CD8-positive, alpha-beta T cell (primary cell): ENCODE measurements at regions of chr6 and their contacts with region 1.

Region 1: DNA sequence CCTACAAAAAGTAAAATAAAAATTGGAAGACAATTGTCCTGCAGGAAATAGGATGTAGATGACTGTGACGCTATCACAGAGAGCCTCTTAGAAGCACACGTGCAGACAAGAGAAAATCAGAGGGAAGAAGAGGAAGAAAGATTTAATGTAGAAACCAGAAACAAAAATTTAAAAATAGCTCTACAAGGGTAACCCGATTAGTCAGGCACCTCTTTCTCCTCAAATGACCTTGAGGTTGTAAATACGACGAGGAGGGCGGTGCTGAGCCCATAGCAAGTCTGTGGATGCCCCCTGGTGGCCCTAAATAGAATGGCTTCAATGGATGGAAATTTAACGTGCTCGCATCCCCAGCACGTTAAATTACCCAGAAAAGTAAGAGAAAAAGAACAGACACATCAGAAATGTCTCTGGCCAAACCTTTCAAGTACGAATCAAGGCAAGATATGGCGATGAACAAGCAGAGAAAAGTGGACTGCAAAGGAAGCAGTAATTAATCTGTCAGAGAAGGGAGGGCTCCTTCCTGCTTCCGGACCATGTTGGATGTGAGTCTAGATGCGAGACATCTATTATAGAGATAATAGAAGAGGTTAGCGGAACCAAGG is 4.2 kb upstream of the PRPH2 start:
- DNase-seq: peak; percentile 29 to 95 (median 76)
- ATAC-seq: peak; percentile 98
- H3K4me3 ChIP-seq: peak overlapping the region; percentile 54 to 73
- H3K4me3 Mint-ChIP-seq: peak overlapping the region; percentile 88
- H3K27ac ChIP-seq: peak overlapping the region; percentile 75 to 85
- H3K27ac Mint-ChIP-seq: peak overlapping the region; percentile 97
- H3K4me1 ChIP-seq: peaks cover 13% of the 10 kb centered on the region
- H3K4me1 Mint-ChIP-seq: peaks cover 17% of the 10 kb centered on the region
- H3K27me3 ChIP-seq: no peaks in the 10 kb centered on the region
- H3K27me3 Mint-ChIP-seq: no peaks in the 10 kb centered on the region
- CTCF ChIP-seq: peak; percentile 88

Region 2: GRCh38 chr6:41941280-41942066 is 785.1 kb before region 1 on chr6 and contains the start of gene CCND3:
- CTCF ChIA-PET with region 1: no interaction called
- POLR2A ChIA-PET with region 1: no interaction called
- intact Hi-C with region 1: no loop called
- DNase-seq: peak; percentile 53 to 92 (median 82)
- ATAC-seq: peak; percentile 63
- H3K4me3 ChIP-seq: peak within 1 kb of the TSS; percentile 51 to 97
- H3K4me3 Mint-ChIP-seq: peak within 1 kb of the TSS; percentile 84
- H3K27ac ChIP-seq: peak within 1 kb of the TSS; percentile 50 to 63
- H3K27ac Mint-ChIP-seq: peak within 1 kb of the TSS; percentile 89
- H3K4me1 ChIP-seq: peaks cover 64% of the 10 kb centered on the region
- H3K4me1 Mint-ChIP-seq: peaks cover 65% of the 10 kb centered on the region
- H3K27me3 ChIP-seq: no peaks in the 10 kb centered on the region
- H3K27me3 Mint-ChIP-seq: no peaks in the 10 kb centered on the region
- CTCF ChIP-seq: no peak
- total RNA-seq, gene CCND3: 129 to 135 TPM

Region 3: GRCh38 chr6:42653851-42654250 is 72.7 kb before region 1 on chr6:
- CTCF ChIA-PET with region 1: interaction called, 14 read pairs
- POLR2A ChIA-PET with region 1: interaction called, 3 read pairs
- intact Hi-C with region 1: no loop called
- DNase-seq: no peak
- ATAC-seq: no peak
- H3K4me3 ChIP-seq: no peak overlapping the region
- H3K4me3 Mint-ChIP-seq: no peak overlapping the region
- H3K27ac ChIP-seq: no peak overlapping the region
- H3K27ac Mint-ChIP-seq: no peak overlapping the region
- H3K4me1 ChIP-seq: no peaks in the 10 kb centered on the region
- H3K4me1 Mint-ChIP-seq: no peaks in the 10 kb centered on the region
- H3K27me3 ChIP-seq: no peaks in the 10 kb centered on the region
- H3K27me3 Mint-ChIP-seq: no peaks in the 10 kb centered on the region
- CTCF ChIP-seq: no peak

Region 4: DNA sequence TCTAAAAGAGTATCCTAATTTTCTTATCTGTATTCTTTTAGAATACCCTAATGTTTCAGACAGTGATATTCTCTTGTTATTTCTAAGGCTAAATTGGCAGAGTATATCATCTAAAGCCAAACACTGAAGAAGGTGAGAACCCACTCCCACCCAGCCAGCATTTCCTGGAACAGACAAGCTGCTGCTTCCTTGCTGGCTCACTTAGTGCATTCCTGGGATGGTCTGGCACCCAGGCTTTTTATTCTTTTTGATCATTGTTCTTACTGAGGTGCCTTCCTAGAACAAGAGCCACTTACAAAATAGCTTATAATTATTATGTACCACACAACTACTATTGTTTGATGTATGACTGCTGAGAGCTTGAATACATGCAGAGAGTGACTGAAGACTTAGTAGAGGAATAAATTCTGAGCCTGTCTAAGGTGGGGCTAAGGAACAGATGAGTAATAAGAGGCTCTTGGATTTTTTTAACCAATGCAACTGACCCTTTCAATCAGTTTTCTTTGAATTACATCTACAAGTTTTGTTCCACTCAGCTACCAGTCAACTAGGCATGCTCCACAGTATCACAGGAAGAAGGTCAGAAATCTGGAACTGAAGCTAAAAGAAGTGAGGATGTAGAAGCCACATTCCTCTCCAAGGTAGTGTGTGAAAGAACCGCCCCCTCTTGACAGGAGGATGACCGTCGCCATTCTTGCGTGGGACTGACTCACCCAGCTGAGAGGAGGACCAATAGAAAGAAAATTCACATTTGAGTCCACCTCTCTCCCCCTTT is 34.3 kb before region 1 on chr6:
- CTCF ChIA-PET with region 1: interaction called, 22 read pairs
- POLR2A ChIA-PET with region 1: interaction called, 4 read pairs
- intact Hi-C with region 1: loop called (anchors 1 to 5 kb)
- DNase-seq: peak in 1 of 9 experiments; percentile 24
- ATAC-seq: peak; percentile 14
- H3K4me3 ChIP-seq: no peak overlapping the region
- H3K4me3 Mint-ChIP-seq: no peak overlapping the region
- H3K27ac ChIP-seq: peak overlapping the region in 1 of 2 experiments; percentile 38
- H3K27ac Mint-ChIP-seq: peak overlapping the region; percentile 91
- H3K4me1 ChIP-seq: peaks cover 39% of the 10 kb centered on the region
- H3K4me1 Mint-ChIP-seq: peaks cover 45% of the 10 kb centered on the region
- H3K27me3 ChIP-seq: no peaks in the 10 kb centered on the region
- H3K27me3 Mint-ChIP-seq: no peaks in the 10 kb centered on the region
- CTCF ChIP-seq: no peak

Region 5: DNA sequence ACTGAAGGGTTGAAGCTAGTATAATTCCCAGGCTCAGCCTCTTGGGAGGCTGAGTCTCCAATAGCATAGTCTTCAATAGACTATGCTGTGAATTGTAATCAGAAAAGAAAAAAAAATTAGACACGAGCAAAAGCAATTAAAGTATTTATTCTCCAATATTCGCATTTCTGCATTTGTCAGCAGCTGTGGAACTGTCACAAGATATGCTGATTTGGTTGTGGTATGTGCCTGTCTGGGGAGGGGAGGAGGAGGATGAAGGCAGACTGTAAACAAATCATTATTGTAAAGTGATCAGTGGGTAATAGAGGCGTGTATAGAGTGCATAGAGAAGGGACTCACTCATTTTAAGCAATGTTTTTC is 45.1 kb after region 1 on chr6:
- CTCF ChIA-PET with region 1: interaction called, 35 read pairs
- POLR2A ChIA-PET with region 1: interaction called, 31 read pairs
- intact Hi-C with region 1: loop called (anchors 1 kb)
- DNase-seq: peak in 5 of 9 experiments; percentile 34 to 83 (median 57)
- ATAC-seq: peak; percentile 21
- H3K4me3 ChIP-seq: peak overlapping the region; percentile 22 to 24
- H3K4me3 Mint-ChIP-seq: peak overlapping the region; percentile 70
- H3K27ac ChIP-seq: peak overlapping the region; percentile 81 to 98
- H3K27ac Mint-ChIP-seq: peak overlapping the region; percentile 100
- H3K4me1 ChIP-seq: peaks cover 67% of the 10 kb centered on the region
- H3K4me1 Mint-ChIP-seq: peaks cover 72% of the 10 kb centered on the region
- H3K27me3 ChIP-seq: no peaks in the 10 kb centered on the region
- H3K27me3 Mint-ChIP-seq: no peaks in the 10 kb centered on the region
- CTCF ChIP-seq: no peak

Region 6: GRCh38 chr6:42790549-42791181 is 64.1 kb after region 1 on chr6:
- CTCF ChIA-PET with region 1: interaction called, 5 read pairs
- POLR2A ChIA-PET with region 1: interaction called, 58 read pairs
- intact Hi-C with region 1: loop called in 1 of 2 experiments (anchors 5 kb)
- DNase-seq: peak in 1 of 9 experiments; percentile 45
- ATAC-seq: no peak
- H3K4me3 ChIP-seq: no peak overlapping the region
- H3K4me3 Mint-ChIP-seq: peak overlapping the region; percentile 4
- H3K27ac ChIP-seq: peak overlapping the region; percentile 10 to 51
- H3K27ac Mint-ChIP-seq: peak overlapping the region; percentile 83
- H3K4me1 ChIP-seq: peaks cover 54% of the 10 kb centered on the region
- H3K4me1 Mint-ChIP-seq: peaks cover 39% of the 10 kb centered on the region
- H3K27me3 ChIP-seq: no peaks in the 10 kb centered on the region
- H3K27me3 Mint-ChIP-seq: no peaks in the 10 kb centered on the region
- CTCF ChIP-seq: no peak

Region 7: DNA sequence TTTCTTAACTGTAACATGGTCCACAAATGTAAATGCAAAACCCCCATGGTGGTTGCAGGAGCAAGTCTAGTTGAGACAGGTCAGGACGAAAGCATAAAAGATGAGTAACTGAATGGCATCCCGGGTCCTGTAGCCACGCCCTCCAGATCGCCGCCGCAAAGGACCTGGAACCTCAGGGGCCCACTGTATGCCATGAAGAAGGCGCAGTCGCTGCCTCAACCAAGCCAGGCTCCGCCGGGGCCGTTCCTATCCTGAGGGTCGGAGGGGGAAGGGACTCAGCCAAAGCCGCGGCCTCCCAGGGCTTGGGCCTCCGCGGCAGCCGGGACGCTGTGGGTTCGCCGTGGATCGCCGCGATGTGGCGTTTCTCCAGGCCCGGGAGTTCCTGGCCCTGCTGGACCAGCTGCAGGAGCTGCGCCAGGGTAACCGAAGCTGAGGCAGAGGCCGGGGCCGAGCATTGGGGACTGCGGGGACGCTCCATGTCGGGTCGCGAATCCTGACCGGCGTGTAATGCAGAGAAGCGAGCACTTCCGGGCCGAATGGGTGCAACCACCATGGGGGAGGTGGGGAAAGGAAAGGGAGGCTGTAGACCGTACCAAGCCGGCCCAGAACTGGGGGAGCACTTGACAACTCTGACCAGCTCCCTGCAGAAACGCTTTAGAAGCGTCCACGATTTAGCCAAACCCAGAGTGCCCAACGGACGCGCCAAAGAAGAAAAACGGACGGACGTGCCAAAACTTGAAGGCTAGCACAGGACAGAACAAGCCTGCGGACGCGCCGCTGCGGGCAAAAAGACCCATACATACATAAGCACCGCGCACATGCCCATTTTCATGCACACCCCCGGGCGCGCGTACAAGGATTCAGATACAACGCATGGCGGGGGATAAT is 164.0 kb after region 1 on chr6:
- CTCF ChIA-PET with region 1: interaction called, 14 read pairs
- POLR2A ChIA-PET with region 1: no interaction called
- intact Hi-C with region 1: no loop called
- DNase-seq: peak; percentile 77 to 94 (median 90)
- ATAC-seq: peak; percentile 95
- H3K4me3 ChIP-seq: peak overlapping the region; percentile 92 to 99
- H3K4me3 Mint-ChIP-seq: peak overlapping the region; percentile 92
- H3K27ac ChIP-seq: peak overlapping the region; percentile 91
- H3K27ac Mint-ChIP-seq: peak overlapping the region; percentile 95
- H3K4me1 ChIP-seq: peaks cover 10% of the 10 kb centered on the region
- H3K4me1 Mint-ChIP-seq: peaks cover 19% of the 10 kb centered on the region
- H3K27me3 ChIP-seq: no peaks in the 10 kb centered on the region
- H3K27me3 Mint-ChIP-seq: no peaks in the 10 kb centered on the region
- CTCF ChIP-seq: no peak

Region 8: DNA sequence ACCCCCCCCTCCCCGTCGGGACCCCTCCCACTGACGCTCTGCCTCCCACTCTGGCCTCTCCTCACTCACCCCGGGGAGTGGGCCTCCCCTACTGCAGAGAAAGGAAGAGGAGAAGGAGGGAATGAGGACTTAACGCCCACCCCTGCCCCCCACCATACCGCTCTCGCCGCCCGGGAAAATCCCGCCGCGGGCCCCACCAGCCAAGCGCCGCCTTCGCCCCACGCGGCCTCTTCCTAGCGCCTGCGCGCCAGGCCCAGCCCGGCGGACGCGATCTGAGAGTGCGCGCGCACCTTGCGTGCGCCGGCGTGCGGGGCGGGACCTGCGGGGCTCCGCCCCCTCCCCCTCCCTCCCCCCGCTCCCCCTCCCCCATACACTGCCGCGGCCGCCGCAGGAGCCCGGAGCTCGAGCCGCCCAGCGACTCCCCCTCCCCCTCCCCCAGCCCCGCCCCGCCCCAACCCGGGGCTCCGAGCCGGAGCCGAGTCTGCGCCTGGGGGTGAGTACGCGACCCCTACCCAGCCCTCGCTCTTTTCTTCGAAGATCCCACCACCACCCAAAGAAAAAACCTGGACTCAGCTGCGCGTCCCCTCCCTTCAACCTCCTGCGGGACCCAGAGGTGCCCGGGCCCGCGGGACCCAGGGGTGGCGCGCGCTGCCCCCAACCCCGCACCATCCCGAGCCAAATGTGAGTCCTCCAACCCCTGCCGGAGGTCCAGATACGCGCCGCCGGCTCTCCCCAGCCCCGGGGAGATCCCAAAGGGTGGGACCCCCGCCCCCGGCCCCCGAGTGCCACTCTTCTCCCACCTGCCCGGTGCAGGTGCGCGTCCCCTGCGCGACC is 1400.8 kb after region 1 on chr6 and contains the starts of genes MRPL14 and TMEM63B:
- CTCF ChIA-PET with region 1: no interaction called
- POLR2A ChIA-PET with region 1: no interaction called
- intact Hi-C with region 1: loop called in 1 of 2 experiments (anchors 5 kb)
- DNase-seq: peak; percentile 81 to 96 (median 88)
- ATAC-seq: peak; percentile 88
- H3K4me3 ChIP-seq: peak within 1 kb of the TSS; percentile 85 to 91
- H3K4me3 Mint-ChIP-seq: peak within 1 kb of the TSS; percentile 94
- H3K27ac ChIP-seq: peak within 1 kb of the TSS; percentile 65 to 82
- H3K27ac Mint-ChIP-seq: peak within 1 kb of the TSS; percentile 96
- H3K4me1 ChIP-seq: peaks cover 50% of the 10 kb centered on the region
- H3K4me1 Mint-ChIP-seq: peaks cover 55% of the 10 kb centered on the region
- H3K27me3 ChIP-seq: no peaks in the 10 kb centered on the region
- H3K27me3 Mint-ChIP-seq: no peaks in the 10 kb centered on the region
- CTCF ChIP-seq: no peak
- total RNA-seq, gene MRPL14: 10.3 to 10.5 TPM
- total RNA-seq, gene TMEM63B: 14.1 to 19.0 TPM